ENCODE measurements at regions of chr3 and their contacts with region 1.

Region 1: DNA sequence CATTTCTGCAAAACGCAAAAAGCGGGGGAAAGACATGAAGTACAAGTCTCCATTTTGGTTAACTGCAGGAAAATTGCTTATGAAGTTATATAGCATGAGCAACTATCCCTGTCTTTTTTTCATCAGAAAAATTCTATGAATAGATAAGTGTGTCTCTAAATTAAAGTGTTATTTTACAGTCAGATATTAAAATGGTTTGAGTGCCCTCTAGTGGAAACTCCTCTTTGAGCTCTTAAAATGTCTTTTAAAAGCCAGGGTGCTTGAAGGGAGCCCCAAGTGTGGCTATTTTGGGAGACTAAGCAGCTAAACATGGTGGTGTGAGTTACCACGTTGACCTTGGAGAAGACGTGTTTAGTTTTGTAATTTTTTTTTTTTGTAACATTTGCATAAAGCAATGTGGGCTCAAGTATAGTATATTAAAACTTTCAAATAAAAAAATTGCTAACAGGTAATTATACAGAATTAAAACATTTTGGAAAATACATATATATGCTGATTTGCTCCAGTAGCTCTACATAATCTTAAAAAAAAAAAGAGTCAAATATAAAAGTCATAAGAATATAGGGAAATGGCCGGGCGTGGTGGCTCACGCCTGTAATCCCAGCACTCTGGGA is 77.2 kb downstream of the PPP2R3A start:
- DNase-seq: no peak
- ATAC-seq: peak; percentile 17

Region 2: DNA sequence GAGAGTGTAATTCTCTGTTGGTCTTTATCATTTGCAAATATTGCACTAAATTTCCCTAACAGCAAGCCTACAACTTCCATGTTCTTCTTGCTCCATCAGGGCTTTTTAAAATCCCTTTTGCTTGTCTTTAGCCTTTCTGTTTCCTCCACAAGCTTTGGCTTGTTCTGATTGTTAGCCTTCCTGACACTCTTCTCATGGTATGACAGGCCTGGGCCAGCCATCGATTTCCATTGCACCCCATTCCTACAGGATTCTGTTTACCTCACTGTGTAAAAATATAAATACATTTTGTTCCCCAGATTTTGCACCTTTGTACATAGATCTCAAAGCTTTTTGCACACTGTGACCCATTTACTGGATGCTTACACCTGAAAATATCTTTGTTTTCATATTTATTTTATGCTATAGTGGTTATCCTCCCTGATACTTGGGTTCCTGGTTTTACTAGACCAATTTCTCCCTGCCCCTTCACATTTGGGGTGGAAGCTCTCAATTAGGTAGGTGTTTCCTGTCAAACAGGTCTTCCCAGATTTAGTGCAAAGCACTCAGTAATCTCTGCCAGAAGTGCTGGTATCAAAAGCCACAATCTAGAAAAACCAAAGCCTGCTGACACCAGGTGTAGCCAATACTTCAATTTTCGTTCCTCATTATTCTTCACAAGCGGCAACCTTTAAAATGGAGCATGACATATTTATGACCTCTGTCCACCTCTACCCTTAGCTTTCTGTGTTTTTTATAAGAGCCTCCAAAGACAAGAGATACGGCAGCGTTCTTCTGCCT is 135.1 kb before region 1 on chr3:
- intact Hi-C with region 1: loop called (anchors 2 kb)
- DNase-seq: no peak
- ATAC-seq: no peak

Region 3: GRCh38 chr3:135918580-135918962 is 124.1 kb before region 1 on chr3:
- intact Hi-C with region 1: loop called (anchors 2 kb)
- DNase-seq: no peak
- ATAC-seq: peak; percentile 62

Region 4: GRCh38 chr3:135965506-135966270 is 77.0 kb before region 1 on chr3 and contains the start of gene PPP2R3A:
- intact Hi-C with region 1: loop called (anchors 5 kb)
- DNase-seq: peak; percentile 89
- ATAC-seq: peak; percentile 97
- total RNA-seq, gene PPP2R3A: 107 TPM

Measured in Right ventricle myocardium inferior (tissue), 1 donor.